ENCODE measurements at regions of chr1 and their contacts with region 1.

Region 1: GRCh38 chr1:1164701-1165451 is 8.8 kb upstream of the TTLL10 start:
- DNase-seq: no peak
- ATAC-seq: peak; percentile 11
- H3K4me3 ChIP-seq: peak overlapping the region; percentile 88 to 97
- H3K27ac ChIP-seq: peak overlapping the region; percentile 98
- H3K4me1 ChIP-seq: peaks cover 15 to 34% of the 10 kb centered on the region in 2 experiments
- H3K27me3 ChIP-seq: no peaks in the 10 kb centered on the region
- CTCF ChIP-seq: no peak
- POLR2A ChIP-seq: no peak
- RAD21 ChIP-seq: no peak

Region 2: GRCh38 chr1:1206376-1207260 is 41.7 kb after region 1 on chr1 and contains the start of gene TNFRSF18:
- CTCF ChIA-PET with region 1: no interaction called
- POLR2A ChIA-PET with region 1: no interaction called
- RAD21 ChIA-PET with region 1: no interaction called
- intact Hi-C with region 1: loop called (anchors 5 kb)
- DNase-seq: peak; percentile 23
- ATAC-seq: peak; percentile 75
- H3K4me3 ChIP-seq: peak within 1 kb of the TSS; percentile 67 to 70
- H3K27ac ChIP-seq: peak within 1 kb of the TSS; percentile 94
- H3K4me1 ChIP-seq: peaks cover 30 to 38% of the 10 kb centered on the region in 2 experiments
- H3K27me3 ChIP-seq: no peaks in the 10 kb centered on the region
- CTCF ChIP-seq: no peak; a peak in 2 of 6 replicates
- POLR2A ChIP-seq: no peak
- RAD21 ChIP-seq: no peak
- total RNA-seq, gene TNFRSF18: 56.2 TPM

Region 3: DNA sequence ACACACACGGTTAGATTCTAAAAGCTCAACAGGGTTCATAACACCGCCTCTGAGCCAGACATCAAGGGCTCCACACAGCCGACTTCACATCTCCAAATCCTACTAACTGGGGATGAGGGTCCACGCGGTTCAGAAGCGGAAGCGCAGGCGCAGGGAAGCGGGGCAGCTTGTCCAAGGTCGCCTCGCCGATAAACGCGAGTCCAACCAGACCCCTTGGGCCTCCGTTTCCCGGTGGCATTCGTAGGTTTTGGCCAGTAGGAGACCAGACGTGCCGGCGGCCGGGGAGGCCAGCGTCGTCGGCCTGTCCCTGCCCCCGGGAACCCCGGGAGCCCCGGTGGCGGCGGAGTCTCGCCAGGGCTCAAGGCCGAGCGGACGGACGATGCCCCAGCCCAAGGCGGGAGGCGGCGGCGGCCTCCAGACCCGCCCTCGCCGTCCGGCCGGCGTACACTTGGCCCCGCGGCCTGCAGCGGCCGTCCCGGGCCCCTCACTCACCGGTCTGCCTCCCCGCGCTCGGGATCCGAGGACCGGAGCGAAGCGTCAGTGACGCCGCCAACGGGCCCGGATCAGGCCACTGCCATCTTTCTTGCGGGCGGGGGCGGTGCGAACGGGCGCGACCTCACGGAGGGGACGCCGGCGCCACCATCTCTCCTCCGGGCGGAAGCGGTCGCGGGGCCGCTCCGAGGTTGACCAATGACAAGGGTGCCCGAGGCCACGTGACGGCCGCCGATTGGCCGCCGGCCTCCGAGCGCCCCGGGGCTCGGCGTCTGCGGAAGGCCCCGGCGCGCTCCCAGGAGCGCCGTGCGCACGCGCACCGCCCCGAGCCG is 66.7 kb after region 1 on chr1 and contains the start of gene SDF4:
- CTCF ChIA-PET with region 1: no interaction called
- POLR2A ChIA-PET with region 1: no interaction called
- RAD21 ChIA-PET with region 1: no interaction called
- intact Hi-C with region 1: loop called (anchors 1 kb)
- DNase-seq: peak; percentile 88
- ATAC-seq: peak; percentile 91
- H3K4me3 ChIP-seq: peak within 1 kb of the TSS; percentile 68 to 87
- H3K27ac ChIP-seq: peak within 1 kb of the TSS; percentile 98
- H3K4me1 ChIP-seq: peaks cover 3 to 19% of the 10 kb centered on the region in 2 experiments; a peak in 1 of 4 replicates
- H3K27me3 ChIP-seq: no peaks in the 10 kb centered on the region
- CTCF ChIP-seq: no peak
- POLR2A ChIP-seq: peak; percentile 44
- RAD21 ChIP-seq: no peak
- total RNA-seq, gene SDF4: 133 TPM

Region 4: DNA sequence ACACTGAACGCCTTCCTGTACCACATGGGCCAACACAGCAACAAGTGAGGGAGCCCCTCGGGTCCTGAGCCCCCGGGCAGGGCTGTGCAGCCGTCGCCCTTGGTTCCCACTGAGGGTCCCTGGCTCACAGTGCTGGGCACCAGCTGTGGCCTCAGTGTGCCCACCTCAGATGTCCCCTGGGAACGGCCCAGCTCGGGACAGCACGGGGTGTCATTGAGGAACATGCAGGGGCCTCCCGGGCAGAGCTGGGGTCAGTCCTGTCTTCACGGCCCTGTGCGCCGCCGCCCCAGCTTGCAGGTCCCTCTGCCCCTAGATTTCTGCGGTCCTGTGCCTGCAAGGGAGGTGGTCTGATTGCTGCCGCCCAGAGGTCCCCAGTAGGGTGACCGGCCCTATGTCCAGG is 324.4 kb after region 1 on chr1:
- CTCF ChIA-PET with region 1: no interaction called
- POLR2A ChIA-PET with region 1: no interaction called
- RAD21 ChIA-PET with region 1: no interaction called
- intact Hi-C with region 1: no loop called
- DNase-seq: no peak
- ATAC-seq: no peak
- H3K4me3 ChIP-seq: no peak overlapping the region
- H3K27ac ChIP-seq: no peak overlapping the region
- H3K4me1 ChIP-seq: no peaks in the 10 kb centered on the region
- H3K27me3 ChIP-seq: no peaks in the 10 kb centered on the region
- CTCF ChIP-seq: no peak
- POLR2A ChIP-seq: no peak
- RAD21 ChIP-seq: no peak